Head of caudate nucleus (tissue), 42 donors: ENCODE measurements at regions of chr5 and their contacts with region 1.

Region 1: GRCh38 chr5:61941637-61942036 is 364.4 kb upstream of the KIF2A start:
- DNase-seq: no peak

Region 2: GRCh38 chr5:61919920-61920319 is 21.7 kb before region 1 on chr5:
- intact Hi-C with region 1: no loop called
- DNase-seq: peak in 1 of 42 donors; percentile 17

Region 3: DNA sequence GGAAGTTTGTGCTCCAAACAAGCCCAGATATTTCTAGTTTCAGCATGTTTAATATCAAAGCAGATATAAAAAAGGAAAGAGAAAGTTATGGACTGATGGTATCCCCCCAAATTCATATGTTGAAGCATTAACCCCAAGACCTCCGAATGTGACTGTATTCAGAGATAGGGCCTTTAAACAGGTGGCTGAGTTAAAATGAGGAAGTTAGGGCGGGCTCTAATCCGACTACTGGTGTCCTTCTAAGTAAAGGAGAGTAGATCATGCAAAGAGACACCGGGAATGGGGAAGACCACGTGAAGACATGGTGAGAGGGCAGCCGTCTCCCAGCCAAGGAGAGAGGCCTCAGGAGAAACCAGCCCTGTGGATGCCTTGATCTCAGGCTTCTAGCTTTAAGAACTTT is 40.2 kb after region 1 on chr5:
- intact Hi-C with region 1: no loop called
- DNase-seq: no peak

Region 4: DNA sequence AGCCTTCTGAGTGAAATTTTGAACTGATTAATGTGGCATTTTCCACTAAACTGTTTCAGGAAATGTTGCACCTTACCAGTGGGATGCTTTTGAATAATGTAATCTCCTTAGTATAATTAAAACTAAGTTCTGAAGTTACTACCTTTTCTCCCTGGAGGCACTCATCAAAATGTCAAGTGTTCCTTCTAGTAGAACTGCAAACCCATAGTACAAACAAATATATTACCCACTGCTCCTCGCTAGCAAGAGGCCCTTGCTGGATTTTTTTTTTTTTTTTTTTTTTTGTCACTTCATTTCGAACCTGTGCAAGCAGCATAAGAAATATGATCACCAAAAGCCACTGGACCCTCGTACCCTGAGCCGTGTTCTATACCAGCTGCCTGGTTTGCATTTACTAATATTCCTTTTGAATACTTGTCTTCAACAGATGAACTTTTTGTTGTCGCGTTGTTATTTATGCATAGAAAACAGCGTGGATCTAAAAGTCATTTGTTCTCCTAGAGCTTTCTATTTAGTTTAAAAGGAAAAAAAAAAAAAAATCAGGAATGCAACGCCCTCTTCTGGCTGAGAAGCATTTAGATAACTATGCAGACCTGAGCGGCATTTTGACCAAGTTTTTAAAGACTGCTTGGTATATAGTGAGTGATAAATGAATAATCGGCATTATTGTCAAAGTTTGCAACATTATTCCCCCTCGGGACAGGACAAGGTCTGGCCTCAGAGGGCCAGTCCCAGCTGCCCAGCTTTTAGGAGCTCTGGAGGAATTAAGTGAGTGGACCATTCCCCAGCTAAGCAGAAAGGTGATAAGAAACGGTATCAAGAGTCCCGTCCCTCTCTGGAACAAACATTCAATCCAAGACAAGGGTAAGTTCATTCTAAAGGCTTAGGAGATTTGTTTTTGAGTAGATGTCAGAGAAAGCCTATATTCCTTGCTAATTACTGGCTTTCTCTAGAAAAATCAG is 201.9 kb after region 1 on chr5:
- intact Hi-C with region 1: loop called (anchors 10 kb)
- DNase-seq: peak in 2 of 42 donors; percentile 8 to 14